ENCODE measurements at regions of chr7 and their contacts with region 1.

Region 1: DNA sequence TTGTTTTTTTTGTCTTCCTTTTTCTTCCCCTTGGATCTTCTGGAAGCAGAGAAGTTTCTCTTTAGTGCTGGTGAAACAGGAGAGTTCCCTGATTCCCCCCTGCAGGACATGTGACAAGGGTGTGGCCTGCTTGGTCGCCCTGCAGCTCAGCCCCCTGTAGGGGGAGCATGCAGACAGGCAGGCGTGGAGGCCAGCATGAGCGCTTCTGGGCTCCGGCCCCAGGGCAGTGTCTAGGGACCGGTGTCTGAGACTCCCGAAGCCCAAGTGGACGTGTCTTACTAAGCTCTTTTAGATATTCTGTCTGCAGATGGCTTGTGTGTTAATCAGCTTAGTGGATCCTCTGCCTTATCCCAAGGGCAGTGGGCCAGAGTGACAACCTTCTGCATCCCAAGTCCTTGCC is 26.1 kb downstream of the PRSS58 start:
- DNase-seq: peak; percentile 29 to 69
- H3K4me3 ChIP-seq: no peak overlapping the region
- H3K27ac ChIP-seq: no peak overlapping the region
- H3K4me1 ChIP-seq: peaks cover 0 to 2% (median under 1%) of the 10 kb centered on the region in 4 experiments; a peak in 1 of 7 replicates
- H3K27me3 ChIP-seq: no peaks in the 10 kb centered on the region
- CTCF ChIP-seq: peak; percentile 63 to 75 (median 68)
- EP300 ChIP-seq: no peak
- POLR2A ChIP-seq: no peak
- RAD21 ChIP-seq: peak; percentile 31 to 51; a peak in 3 of 4 replicates

Region 2: DNA sequence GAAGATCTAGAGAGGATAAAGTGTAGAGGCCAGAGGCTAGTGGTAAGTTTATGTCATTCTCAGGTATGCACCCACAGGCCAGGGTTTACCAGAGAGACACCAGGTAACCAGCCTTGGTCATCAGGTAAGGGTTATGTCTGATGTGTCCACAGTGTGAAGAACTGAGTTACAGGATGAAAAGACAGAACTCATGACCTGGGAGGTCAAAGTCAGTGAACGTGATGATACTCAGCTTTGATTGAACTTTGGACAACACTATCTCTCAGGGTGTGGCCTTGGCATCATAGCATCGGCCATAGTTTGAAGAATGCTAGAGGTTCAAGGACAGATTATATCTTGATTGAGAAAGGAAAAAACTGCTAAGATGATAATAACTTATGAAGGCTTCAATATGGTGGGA is 198.6 kb before region 1 on chr7:
- CTCF ChIA-PET with region 1: no interaction called
- POLR2A ChIA-PET with region 1: no interaction called
- DNase-seq: no peak
- H3K4me3 ChIP-seq: no peak overlapping the region
- H3K27ac ChIP-seq: no peak overlapping the region
- H3K4me1 ChIP-seq: no peaks in the 10 kb centered on the region
- H3K27me3 ChIP-seq: no peaks in the 10 kb centered on the region
- CTCF ChIP-seq: no peak
- EP300 ChIP-seq: no peak
- POLR2A ChIP-seq: no peak
- RAD21 ChIP-seq: no peak

Region 3: GRCh38 chr7:142248166-142249160 is 16.7 kb after region 1 on chr7:
- CTCF ChIA-PET with region 1: interaction called, 20 read pairs
- POLR2A ChIA-PET with region 1: no interaction called
- DNase-seq: peak in 1 of 2 experiments; percentile 51
- H3K4me3 ChIP-seq: no peak overlapping the region
- H3K27ac ChIP-seq: no peak overlapping the region
- H3K4me1 ChIP-seq: peaks cover 0 to 5% (median 2%) of the 10 kb centered on the region in 4 experiments; a peak in 2 of 7 replicates
- H3K27me3 ChIP-seq: no peaks in the 10 kb centered on the region
- CTCF ChIP-seq: peak in 1 of 3 experiments; percentile 30; a peak in 2 of 4 replicates
- EP300 ChIP-seq: no peak
- POLR2A ChIP-seq: no peak
- RAD21 ChIP-seq: peak in 1 of 2 experiments; percentile 34; a peak in 1 of 4 replicates